Psoas muscle (tissue), 8 donors: ENCODE measurements at regions of chr9 and their contacts with region 1.

Region 1: GRCh38 chr9:91117959-91118703 is 243.6 kb downstream of the AUH start:
- DNase-seq: peak; percentile 89 to 95
- ATAC-seq: peak; percentile 96 to 98 (median 97)
- H3K4me3 ChIP-seq: peak overlapping the region; percentile 62
- H3K27ac ChIP-seq: peak overlapping the region; percentile 92
- H3K4me1 ChIP-seq: peaks cover 30% of the 10 kb centered on the region
- H3K27me3 ChIP-seq: no peaks in the 10 kb centered on the region
- CTCF ChIP-seq: no peak

Region 2: GRCh38 chr9:90517110-90517509 is 601.0 kb before region 1 on chr9:
- intact Hi-C with region 1: no loop called
- DNase-seq: no peak
- ATAC-seq: no peak
- H3K4me3 ChIP-seq: no peak overlapping the region
- H3K27ac ChIP-seq: no peak overlapping the region
- H3K4me1 ChIP-seq: no peaks in the 10 kb centered on the region
- H3K27me3 ChIP-seq: no peaks in the 10 kb centered on the region
- CTCF ChIP-seq: no peak

Region 3: DNA sequence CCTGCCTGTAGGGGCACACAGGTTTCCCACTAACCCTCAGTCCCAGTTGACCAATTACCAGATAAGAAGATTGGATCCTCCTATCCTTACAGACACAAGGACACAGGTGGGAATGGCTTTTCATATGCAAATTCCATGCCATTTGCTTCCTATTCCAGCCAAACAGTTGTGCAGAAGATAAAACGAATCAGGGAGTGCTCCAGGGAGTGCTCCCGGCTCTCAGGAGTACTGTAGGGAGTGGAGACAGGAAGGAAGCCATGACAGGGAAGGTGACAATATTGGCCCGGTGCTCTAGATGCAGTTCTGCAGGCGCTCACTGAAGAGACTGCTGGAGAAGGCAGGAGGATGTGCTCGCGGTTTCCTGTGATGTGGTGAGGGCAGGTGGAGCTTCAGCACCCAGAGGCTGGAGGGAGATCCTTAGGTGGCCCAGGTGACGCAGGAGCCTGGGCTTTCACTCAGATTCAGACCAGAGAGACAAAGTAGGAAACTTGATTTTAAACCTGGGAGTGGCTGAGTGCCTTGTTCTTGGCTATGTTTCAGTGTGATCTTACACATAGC is 16.4 kb before region 1 on chr9:
- intact Hi-C with region 1: loop called in 1 of 2 experiments (anchors 1 kb)
- DNase-seq: no peak
- ATAC-seq: no peak
- H3K4me3 ChIP-seq: no peak overlapping the region
- H3K27ac ChIP-seq: peak overlapping the region; percentile 92
- H3K4me1 ChIP-seq: peaks cover 25% of the 10 kb centered on the region
- H3K27me3 ChIP-seq: no peaks in the 10 kb centered on the region
- CTCF ChIP-seq: no peak

Region 4: DNA sequence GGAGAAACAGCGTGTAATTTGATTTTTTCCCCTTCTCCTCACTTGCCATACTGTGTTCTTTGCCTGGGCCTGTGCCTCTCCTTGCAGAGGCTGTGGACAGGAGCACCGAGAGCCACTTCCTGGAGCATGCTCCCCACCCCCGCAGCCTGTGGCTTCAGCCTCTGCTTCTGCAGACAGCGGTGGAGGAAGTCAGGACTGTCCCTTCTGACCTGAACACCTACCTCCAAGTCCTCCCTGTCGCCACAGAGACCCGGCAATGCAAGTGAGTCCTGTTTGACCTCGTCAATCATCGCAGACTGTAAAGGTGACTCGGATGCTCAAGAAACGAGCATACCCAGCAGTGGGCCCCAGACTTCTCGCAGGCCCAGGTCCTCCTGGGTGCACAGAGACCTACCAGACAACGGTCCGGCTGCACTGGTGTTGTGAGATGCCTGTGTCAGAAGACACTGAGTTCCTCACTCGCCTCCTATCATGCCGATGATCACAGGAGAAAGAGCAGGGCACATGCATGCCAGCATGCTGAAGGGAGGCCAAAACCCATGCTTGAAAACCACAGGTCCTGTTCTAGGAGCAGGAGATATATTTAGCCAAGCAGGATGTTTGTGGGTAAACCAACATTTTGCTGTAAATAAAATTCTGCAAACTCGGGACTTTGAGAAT is 44.8 kb after region 1 on chr9:
- intact Hi-C with region 1: no loop called
- DNase-seq: no peak
- ATAC-seq: peak in 3 of 4 donors; percentile 19 to 48 (median 25)
- H3K4me3 ChIP-seq: no peak overlapping the region
- H3K27ac ChIP-seq: no peak overlapping the region
- H3K4me1 ChIP-seq: peaks cover 25% of the 10 kb centered on the region
- H3K27me3 ChIP-seq: no peaks in the 10 kb centered on the region
- CTCF ChIP-seq: no peak

Region 5: GRCh38 chr9:91500509-91501011 is 382.4 kb after region 1 on chr9:
- intact Hi-C with region 1: no loop called
- DNase-seq: no peak
- ATAC-seq: no peak
- H3K4me3 ChIP-seq: no peak overlapping the region
- H3K27ac ChIP-seq: no peak overlapping the region
- H3K4me1 ChIP-seq: no peaks in the 10 kb centered on the region
- H3K27me3 ChIP-seq: no peaks in the 10 kb centered on the region
- CTCF ChIP-seq: no peak